BJ (cell line): ENCODE measurements at regions of chr1 and their contacts with region 1.

Region 1: DNA sequence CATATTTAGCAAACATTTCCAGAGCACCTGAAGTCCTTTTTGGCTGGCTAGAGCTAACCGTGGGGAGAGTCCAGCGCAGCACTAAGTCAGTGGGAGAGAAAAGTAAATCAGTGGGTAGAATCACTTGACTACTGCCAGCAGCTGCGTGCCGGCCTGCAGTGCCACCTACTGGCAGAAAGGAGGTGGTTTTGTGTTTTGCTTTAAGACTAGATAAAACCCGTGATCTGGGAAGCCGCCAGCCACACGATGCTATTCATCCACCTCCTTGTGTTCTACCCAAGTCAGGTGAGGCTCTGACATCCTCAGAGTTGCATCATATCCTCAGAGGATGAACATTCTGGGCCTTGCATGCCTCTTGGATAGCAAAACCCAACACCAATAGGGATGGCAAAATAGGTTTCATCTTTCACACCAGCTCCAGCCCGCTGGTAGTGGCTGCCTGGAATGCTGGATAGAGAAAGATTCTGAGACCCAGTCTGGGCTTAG is 14.1 kb upstream of the HEYL start:
- DNase-seq: peak; percentile 20
- H3K4me3 ChIP-seq: no peak overlapping the region
- H3K27me3 ChIP-seq: peaks cover 6% of the 10 kb centered on the region
- CTCF ChIP-seq: peak; percentile 92

Region 2: DNA sequence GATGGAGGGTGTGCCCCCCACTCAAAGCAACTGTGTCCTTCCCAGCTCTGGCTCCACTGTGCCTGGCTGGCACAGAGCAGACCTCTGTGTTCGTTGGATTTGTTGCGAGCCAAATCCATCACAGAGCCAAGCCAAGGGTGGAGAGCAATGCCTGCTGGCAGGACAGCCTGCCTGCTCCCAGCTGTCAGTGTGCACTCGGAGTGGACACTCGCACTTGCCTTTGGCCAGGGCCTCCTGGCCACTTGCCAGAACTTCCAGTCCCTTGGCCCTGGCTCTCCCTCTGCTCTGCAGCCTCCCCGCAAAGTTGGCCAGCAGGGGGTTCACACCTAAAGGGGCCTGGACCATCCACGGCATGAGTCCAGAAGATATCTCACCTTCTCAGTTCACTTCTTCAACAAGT is 30.5 kb before region 1 on chr1:
- CTCF ChIA-PET with region 1: interaction called, 26 read pairs
- POLR2A ChIA-PET with region 1: no interaction called
- DNase-seq: no peak
- H3K4me3 ChIP-seq: no peak overlapping the region
- H3K27me3 ChIP-seq: peaks cover 4% of the 10 kb centered on the region; the same call in 1 of the 2 replicates
- CTCF ChIP-seq: no peak

Region 3: DNA sequence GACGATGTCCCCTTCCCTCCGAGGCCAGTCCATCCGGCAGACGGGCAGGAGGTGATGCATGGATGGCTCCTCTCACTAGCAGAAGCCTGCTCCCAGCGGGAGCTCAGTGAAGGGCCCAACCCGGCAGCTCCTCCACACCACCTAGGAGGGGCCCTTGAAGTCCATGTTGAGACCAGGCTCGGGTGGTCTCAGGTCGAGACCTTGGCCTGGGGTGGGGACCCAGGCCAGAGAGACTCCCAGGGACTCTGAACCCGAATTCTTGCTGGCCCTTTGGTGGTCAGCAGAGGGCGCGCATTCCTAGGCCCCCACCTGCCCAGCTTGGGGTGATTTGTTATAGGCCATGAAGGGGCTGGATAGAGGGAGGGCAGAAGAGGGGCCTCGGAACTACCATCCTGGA is 19.0 kb after region 1 on chr1:
- CTCF ChIA-PET with region 1: interaction called, 137 read pairs
- POLR2A ChIA-PET with region 1: no interaction called
- DNase-seq: no peak
- H3K4me3 ChIP-seq: no peak overlapping the region
- H3K27me3 ChIP-seq: peaks cover 46% of the 10 kb centered on the region
- CTCF ChIP-seq: peak; percentile 49

Region 4: DNA sequence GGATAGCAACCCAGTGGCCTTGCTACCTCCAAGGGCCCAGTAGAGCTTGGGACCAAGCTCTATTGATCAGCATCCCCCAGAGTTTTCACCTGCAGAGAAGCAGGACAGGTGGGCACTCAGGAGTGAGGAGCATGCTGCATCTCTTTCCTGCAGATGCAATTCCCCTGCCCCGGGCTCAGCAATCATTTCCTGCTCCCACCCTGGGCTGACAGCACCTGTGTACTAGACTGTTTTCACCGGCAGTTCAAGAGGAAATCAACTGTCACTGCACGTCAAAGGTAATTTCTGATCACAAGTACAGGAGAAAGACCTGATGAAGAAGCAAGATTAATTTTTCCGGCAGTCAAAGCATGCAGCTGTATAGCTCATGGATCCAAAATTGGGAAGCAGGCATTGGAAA is 27.2 kb after region 1 on chr1:
- CTCF ChIA-PET with region 1: interaction called, 137 read pairs
- POLR2A ChIA-PET with region 1: no interaction called
- DNase-seq: no peak
- H3K4me3 ChIP-seq: no peak overlapping the region
- H3K27me3 ChIP-seq: peaks cover 30% of the 10 kb centered on the region
- CTCF ChIP-seq: no peak